ENCODE measurements at regions of chr9 and their contacts with region 1.

Region 1: GRCh38 chr9:35116898-35117551 is 1.4 kb upstream of the ATOSB start:
- DNase-seq: peak; percentile 94

Region 2: DNA sequence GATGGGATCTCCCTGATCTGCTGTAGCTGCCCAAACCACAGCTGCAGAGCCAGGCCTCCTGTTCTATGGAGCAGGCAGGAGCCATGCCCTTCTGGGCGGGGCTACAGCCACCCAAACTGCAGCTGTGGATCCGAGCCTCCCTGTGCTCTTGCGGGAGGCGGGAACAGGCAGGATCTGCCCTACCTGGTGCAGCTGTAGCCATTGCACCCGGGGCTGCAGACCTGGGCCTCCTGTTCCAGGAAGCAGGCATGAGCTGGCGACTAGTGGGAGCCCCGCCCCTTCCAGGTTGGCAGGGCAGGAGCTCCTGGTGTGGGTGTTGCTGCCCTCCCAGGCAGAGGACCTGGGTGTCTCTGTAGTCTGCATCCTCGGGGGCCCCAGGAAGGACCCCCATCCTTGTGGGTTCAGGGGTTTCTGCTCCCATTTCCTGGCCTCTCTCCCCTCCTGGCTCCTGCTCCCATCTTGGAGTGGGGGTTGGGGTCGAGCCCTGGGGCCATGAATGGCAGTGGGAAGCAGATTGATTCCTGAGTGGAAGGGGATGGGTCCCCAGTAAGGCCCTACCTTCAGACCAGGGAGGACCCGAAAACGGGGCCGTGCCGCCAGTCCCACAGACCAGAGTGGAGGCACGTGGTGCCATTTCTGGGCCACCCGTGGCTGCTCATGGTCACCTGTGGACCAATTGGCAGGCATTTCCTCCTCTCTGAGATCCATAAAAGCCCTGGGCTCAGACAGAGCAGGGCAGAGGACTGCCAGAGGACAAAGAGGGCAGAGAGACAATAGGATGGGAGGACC is 21.9 kb after region 1 on chr9:
- intact Hi-C with region 1: no loop called
- DNase-seq: no peak

Region 3: DNA sequence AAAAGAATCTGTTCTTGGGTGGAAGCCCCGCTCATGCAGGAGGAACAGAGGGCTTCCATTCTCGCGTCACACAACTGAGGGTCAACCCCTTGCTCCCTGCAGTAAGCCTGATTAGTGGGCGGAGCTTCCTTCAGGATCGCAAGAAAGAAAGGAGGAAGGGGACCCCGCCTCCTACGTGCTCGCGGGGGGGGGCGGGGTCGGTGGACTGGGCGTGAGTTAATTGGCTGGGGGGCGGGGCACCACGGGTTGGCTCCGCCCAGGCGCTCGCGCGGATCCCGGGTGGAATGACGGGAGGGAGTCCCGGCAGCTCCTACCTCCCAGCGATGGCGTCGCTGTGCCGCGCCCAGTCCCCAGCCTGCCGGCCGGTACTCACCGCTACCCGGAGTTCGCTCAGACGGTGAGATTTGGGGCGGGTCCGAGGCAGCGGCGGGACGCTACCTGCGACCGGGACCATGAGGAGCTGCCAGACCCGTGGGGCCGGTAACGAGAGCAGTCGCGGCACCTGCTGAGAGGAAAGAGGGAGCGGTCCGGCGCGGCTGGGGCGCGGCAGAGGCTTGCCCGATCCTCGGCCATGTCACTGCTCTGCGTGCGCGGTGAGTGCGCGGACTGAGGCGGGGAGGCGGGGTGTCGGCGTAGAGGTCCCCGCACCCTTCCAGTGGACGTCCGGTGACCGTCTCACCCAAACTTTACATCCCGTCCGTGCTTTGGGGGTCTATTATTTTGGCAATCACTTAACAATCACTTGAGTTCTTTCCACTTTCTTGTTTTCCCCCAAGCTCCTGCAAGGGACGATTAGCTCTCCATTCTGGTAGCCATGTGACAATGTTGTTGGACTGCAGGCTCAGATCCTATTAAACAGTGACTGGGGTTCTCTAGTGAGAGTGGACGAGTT is 44.9 kb after region 1 on chr9 and contains the start of gene UNC13B:
- intact Hi-C with region 1: loop called (anchors 1 kb)
- DNase-seq: peak; percentile 96
- total RNA-seq, gene UNC13B: 24.7 TPM

Region 4: DNA sequence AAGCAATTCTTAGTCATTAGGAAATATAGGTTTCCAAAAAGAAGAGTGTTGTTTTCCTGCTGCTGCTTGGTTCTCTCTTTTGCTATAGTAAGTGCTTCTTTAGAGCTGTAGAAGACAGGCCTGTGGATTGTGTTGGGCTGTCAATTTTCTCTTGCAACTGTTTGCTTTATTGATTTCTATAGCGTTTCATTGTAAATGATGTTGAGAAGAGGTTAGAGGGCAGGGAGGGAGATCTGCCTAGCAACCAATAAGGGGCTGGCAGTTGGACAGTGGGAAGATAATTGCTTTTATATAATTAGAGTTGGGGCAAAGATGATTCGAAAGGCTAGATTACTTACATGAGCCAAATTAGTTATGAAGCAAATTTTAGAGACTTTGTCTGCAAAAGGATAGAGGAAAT is 55.9 kb after region 1 on chr9:
- intact Hi-C with region 1: no loop called
- DNase-seq: no peak